ENCODE measurements at regions of chr6 and their contacts with region 1.

Region 1: GRCh38 chr6:17706580-17707370 is at the start of gene NUP153:
- DNase-seq: peak; percentile 99
- H3K4me3 ChIP-seq: peak within 1 kb of the TSS; percentile 95 to 99 (median 99)
- H3K27ac ChIP-seq: peak within 1 kb of the TSS; percentile 99
- H3K4me1 ChIP-seq: peaks cover 36% of the 10 kb centered on the region
- H3K27me3 ChIP-seq: no peaks in the 10 kb centered on the region
- CTCF ChIP-seq: no peak
- POLR2A ChIP-seq: peak; percentile 83
- total RNA-seq, gene NUP153: 47.7 and 51.0 TPM in 2 replicates

Region 2: DNA sequence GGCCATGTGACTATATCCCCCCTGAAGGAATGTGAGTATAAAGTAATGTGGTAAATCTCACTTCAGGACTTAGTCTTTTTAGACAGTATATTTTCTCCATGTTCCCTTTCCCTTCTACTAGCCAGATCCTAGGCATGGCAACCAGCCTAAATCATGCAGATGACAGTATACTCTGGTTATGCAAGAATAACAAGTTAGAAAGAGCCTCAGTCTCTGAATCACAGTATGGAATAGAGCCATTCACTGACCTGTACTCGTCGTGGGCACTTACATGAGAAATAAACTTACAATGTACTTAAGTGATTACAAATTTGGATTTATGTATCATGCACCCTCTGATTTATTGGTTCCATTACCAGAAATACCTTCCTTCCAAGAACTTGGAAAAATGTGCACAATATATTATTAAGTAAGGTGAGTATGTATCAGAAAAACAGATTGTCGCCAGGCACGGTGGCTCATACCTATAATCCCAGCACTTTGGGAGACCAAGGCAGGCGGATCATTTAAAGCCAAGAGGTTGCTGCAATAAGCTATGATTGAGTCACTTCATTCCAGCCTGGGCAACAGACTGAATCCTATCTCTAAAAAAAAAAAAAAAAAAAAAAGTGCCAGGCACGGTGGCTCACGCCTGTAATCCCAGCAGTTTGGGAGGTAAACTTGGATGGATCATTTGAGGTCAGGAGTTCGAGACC is 131.8 kb before region 1 on chr6:
- CTCF ChIA-PET with region 1: no interaction called
- POLR2A ChIA-PET with region 1: no interaction called
- dilution Hi-C with region 1: no loop called
- intact Hi-C with region 1: no loop called
- DNase-seq: no peak
- H3K4me3 ChIP-seq: no peak overlapping the region
- H3K27ac ChIP-seq: no peak overlapping the region
- H3K4me1 ChIP-seq: no peaks in the 10 kb centered on the region
- H3K27me3 ChIP-seq: peaks cover 3 to 9% of the 10 kb centered on the region in 2 experiments
- CTCF ChIP-seq: no peak
- POLR2A ChIP-seq: no peak

Region 3: GRCh38 chr6:17599885-17600526 is 106.8 kb before region 1 on chr6 and contains the start of gene FAM8A1:
- CTCF ChIA-PET with region 1: no interaction called
- POLR2A ChIA-PET with region 1: interaction called, 4 read pairs
- dilution Hi-C with region 1: no loop called
- intact Hi-C with region 1: loop called (anchors 1 kb)
- DNase-seq: peak; percentile 84
- H3K4me3 ChIP-seq: peak within 1 kb of the TSS; percentile 42 to 94 (median 91)
- H3K27ac ChIP-seq: peak within 1 kb of the TSS; percentile 84
- H3K4me1 ChIP-seq: peaks cover 5% of the 10 kb centered on the region
- H3K27me3 ChIP-seq: no peaks in the 10 kb centered on the region
- CTCF ChIP-seq: peak in 1 of 2 donors; percentile 69
- POLR2A ChIP-seq: peak; percentile 62
- total RNA-seq, gene FAM8A1: 11.3 and 11.5 TPM in 2 replicates

Region 4: DNA sequence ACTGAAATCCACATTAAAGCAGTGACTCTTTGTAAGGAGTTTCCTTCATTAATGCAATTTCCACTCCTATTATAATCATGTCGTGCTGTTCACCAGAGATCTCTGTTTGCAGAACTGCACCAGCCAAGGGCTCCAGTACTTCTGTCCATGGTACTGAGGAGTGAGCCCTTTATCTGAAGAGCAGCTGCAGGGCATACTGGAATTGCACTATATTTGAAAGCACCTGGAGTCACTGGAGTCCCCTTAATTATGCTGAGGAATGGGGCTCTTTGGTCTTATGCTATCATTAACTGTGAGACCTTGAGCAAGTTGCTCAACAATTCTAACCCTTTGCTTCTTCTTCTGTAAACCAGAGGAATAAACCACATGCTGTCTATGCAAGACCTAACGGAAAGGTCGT is 61.6 kb after region 1 on chr6:
- CTCF ChIA-PET with region 1: interaction called, 4 read pairs
- POLR2A ChIA-PET with region 1: no interaction called
- dilution Hi-C with region 1: no loop called
- intact Hi-C with region 1: loop called (anchors 5 kb)
- DNase-seq: peak; percentile 32
- H3K4me3 ChIP-seq: no peak overlapping the region
- H3K27ac ChIP-seq: no peak overlapping the region
- H3K4me1 ChIP-seq: no peaks in the 10 kb centered on the region
- H3K27me3 ChIP-seq: no peaks in the 10 kb centered on the region
- CTCF ChIP-seq: no peak
- POLR2A ChIP-seq: no peak

Region 5: DNA sequence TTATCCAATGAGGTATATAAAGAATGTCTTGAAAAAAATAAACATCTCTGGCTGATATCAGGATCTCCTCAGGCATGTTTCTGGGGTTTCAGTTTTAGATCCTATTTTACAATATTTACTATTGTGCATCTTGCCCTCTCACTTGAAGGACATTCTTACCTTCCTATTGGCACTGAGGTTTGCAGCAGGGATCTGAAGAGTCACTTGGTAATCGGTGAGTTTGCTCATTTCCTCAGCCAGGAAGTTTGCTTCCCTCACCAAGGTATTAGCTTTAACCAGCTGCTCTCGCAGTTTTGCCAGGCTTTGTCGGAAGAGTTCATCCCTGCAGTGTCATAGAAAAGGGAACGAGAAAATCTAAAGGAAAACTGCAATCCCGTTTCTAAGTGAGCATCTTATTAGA is 101.8 kb after region 1 on chr6:
- CTCF ChIA-PET with region 1: interaction called, 27 read pairs
- POLR2A ChIA-PET with region 1: no interaction called
- dilution Hi-C with region 1: no loop called
- intact Hi-C with region 1: loop called (anchors 1 kb)
- DNase-seq: no peak
- H3K4me3 ChIP-seq: no peak overlapping the region
- H3K27ac ChIP-seq: no peak overlapping the region
- H3K4me1 ChIP-seq: peaks cover 8% of the 10 kb centered on the region
- H3K27me3 ChIP-seq: no peaks in the 10 kb centered on the region
- CTCF ChIP-seq: no peak
- POLR2A ChIP-seq: no peak

Region 6: DNA sequence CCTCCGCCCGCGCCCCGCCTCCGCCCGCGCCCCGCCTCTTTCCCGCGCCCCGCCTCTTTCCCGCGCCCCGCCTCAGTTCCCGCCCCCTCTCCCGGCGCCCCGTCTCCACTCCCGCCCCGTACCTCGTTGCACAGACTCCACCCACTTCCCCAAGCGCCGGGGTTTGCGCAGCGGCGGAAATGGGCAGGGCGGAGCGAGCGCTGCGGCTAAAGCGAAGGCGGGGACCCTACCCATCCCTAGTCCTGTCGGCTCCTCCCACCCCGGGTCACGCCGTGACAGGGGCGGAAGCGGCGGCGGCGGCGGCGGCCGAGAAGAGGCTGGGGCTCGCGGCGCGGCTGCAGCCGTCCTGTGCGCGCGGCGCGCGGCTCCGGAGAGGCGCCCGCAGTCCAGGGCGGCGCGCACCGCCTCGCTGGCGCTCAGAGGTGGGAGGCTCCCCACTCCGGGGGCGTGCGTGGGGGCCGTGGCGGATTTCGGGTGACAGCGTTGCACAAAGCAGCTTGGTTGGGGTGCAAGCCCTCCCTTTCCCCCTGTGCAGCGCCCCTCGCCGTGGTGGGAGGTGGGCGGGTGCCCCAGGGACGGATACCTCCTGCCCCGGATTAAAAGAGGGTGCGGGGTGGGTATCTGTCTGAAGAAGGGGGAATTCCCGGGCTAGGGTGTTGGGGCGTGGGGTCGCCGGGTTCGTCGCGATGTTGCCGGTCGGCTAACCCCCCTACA is 448.5 kb after region 1 on chr6 and contains the start of gene KDM1B:
- CTCF ChIA-PET with region 1: no interaction called
- POLR2A ChIA-PET with region 1: no interaction called
- dilution Hi-C with region 1: no loop called
- intact Hi-C with region 1: loop called (anchors 1 kb)
- DNase-seq: peak; percentile 98
- H3K4me3 ChIP-seq: peak within 1 kb of the TSS; percentile 91 to 95 (median 92)
- H3K27ac ChIP-seq: peak within 1 kb of the TSS; percentile 71
- H3K4me1 ChIP-seq: peaks cover 19% of the 10 kb centered on the region
- H3K27me3 ChIP-seq: no peaks in the 10 kb centered on the region
- CTCF ChIP-seq: no peak
- POLR2A ChIP-seq: no peak
- total RNA-seq, gene KDM1B: 9.6 and 10.8 TPM in 2 replicates

Measured in endothelial cell of umbilical vein (primary cell).